ENCODE measurements at regions of chr9 and their contacts with region 1.

Region 1: DNA sequence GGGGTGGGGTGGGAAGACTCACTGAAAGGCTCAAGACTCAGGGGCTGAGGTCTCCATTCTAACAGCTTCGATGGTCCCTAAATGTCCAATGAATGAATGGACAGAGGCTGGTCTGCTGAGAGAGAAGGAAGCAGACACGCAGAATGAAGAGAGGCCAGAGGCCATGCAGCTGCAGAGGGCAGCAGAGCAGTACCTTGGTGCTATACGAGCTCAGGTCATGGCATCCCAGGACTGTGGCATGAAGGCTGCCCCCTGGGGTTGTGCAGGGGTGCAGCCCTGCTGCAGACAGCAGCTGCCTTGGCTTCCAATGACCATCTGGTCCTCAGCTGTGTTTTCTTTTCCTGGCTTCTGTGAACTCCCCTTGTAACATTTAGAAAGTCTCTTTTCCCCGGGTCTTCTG is 15.2 kb upstream of the CORO2A start:
- DNase-seq: no peak
- H3K4me3 ChIP-seq: no peak overlapping the region
- H3K27ac ChIP-seq: no peak overlapping the region
- H3K4me1 ChIP-seq: no peaks in the 10 kb centered on the region
- H3K27me3 ChIP-seq: no peaks in the 10 kb centered on the region
- CTCF ChIP-seq: no peak

Region 2: GRCh38 chr9:98263482-98264357 is 56.1 kb after region 1 on chr9:
- intact Hi-C with region 1: loop called (anchors 2 kb)
- DNase-seq: peak; percentile 87
- H3K4me3 ChIP-seq: no peak overlapping the region
- H3K27ac ChIP-seq: no peak overlapping the region
- H3K4me1 ChIP-seq: no peaks in the 10 kb centered on the region
- H3K27me3 ChIP-seq: no peaks in the 10 kb centered on the region
- CTCF ChIP-seq: peak; percentile 90

Measured in colonic mucosa (tissue), 4 donors.